CD4-positive, alpha-beta T cell (primary cell): ENCODE measurements at regions of chr11 and their contacts with region 1.

Region 1: GRCh38 chr11:19071255-19071654 is 10.7 kb upstream of the MRGPRX2 start:
- DNase-seq: peak in 13 of 14 experiments; percentile 13 to 80 (median 35)
- ATAC-seq: peak; percentile 96
- H3K4me3 ChIP-seq: no peak overlapping the region
- H3K4me3 Mint-ChIP-seq: no peak overlapping the region
- H3K27ac ChIP-seq: no peak overlapping the region
- H3K27ac Mint-ChIP-seq: no peak overlapping the region
- H3K4me1 ChIP-seq: peaks cover 6% of the 10 kb centered on the region
- H3K4me1 Mint-ChIP-seq: peaks cover 6% of the 10 kb centered on the region
- H3K27me3 ChIP-seq: peaks cover 3 to 5% of the 10 kb centered on the region in 2 experiments
- H3K27me3 Mint-ChIP-seq: peaks cover 28% of the 10 kb centered on the region
- CTCF ChIP-seq: peak; percentile 98

Region 2: DNA sequence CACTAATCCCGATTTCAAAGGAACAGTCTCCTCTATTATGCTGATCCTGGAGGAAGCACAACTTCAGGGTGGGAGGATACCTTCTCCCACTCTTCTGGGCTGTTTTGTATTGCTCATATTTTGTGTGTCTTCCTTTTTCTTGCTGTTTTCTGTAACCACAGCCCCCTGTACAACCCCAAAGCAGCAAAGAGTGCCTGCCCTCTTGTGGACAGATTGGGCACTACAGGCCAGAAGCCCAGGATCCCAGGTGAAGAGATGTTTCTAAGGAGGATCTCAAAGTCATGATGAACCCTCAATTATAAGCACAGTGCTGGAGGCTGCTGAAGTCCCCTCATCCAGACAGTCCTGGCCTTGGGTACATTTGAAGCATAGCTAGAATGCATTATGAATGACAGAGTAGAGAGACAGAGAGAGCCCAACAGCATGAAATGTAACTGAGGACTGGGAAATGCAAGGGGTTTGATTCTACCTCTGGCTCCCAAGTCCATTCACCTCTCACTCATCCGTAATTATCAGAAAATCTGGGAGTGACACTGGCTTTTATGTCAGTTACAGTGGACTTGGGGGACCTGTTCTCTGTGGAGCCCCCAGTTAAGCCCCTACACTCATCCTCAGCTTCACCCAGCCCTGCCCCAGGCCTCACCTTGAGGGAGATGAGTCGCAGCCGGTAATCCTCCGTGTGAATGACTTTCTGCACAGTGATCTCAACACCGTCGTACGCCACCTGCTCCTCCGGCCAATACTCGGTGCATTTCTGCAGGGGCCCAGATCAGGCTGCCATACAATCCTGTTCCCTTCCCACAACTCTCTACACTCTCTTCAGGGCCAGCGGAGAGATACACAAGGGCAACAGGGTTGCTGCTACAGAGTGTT is 339.1 kb before region 1 on chr11:
- CTCF ChIA-PET with region 1: no interaction called
- POLR2A ChIA-PET with region 1: no interaction called
- intact Hi-C with region 1: no loop called
- DNase-seq: peak; percentile 40 to 82 (median 67)
- ATAC-seq: peak; percentile 80
- H3K4me3 ChIP-seq: no peak overlapping the region
- H3K4me3 Mint-ChIP-seq: no peak overlapping the region
- H3K27ac ChIP-seq: no peak overlapping the region
- H3K27ac Mint-ChIP-seq: no peak overlapping the region
- H3K4me1 ChIP-seq: peaks cover 17% of the 10 kb centered on the region
- H3K4me1 Mint-ChIP-seq: peaks cover 10% of the 10 kb centered on the region
- H3K27me3 ChIP-seq: no peaks in the 10 kb centered on the region
- H3K27me3 Mint-ChIP-seq: no peaks in the 10 kb centered on the region
- CTCF ChIP-seq: peak; percentile 97

Region 3: DNA sequence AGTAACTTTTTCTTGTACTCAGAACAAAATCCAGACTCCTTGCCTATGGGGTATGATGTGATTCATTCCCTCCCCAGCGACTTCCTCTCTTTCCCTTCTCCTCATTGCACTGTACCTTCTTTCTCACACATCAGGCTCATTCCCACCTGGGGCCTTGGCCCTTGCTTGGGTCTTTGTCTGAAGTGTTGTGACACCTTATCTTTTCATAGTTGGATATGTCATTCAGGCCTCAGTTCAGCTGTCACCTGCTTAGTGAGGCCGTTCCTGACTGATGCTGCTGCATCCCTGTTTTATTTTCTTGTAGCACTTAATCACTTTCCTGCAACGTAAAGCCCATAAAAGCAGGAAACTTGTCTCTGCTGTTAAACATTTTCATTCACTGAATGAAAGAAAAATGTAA is 85.6 kb after region 1 on chr11:
- CTCF ChIA-PET with region 1: no interaction called
- POLR2A ChIA-PET with region 1: no interaction called
- intact Hi-C with region 1: loop called in 1 of 2 experiments (anchors 5 kb)
- DNase-seq: no peak
- ATAC-seq: no peak
- H3K4me3 ChIP-seq: no peak overlapping the region
- H3K4me3 Mint-ChIP-seq: no peak overlapping the region
- H3K27ac ChIP-seq: no peak overlapping the region
- H3K27ac Mint-ChIP-seq: no peak overlapping the region
- H3K4me1 ChIP-seq: no peaks in the 10 kb centered on the region
- H3K4me1 Mint-ChIP-seq: no peaks in the 10 kb centered on the region
- H3K27me3 ChIP-seq: no peaks in the 10 kb centered on the region
- H3K27me3 Mint-ChIP-seq: no peaks in the 10 kb centered on the region
- CTCF ChIP-seq: no peak